Left ventricle myocardium superior (tissue), 1 donor: ENCODE measurements at regions of chr11 and their contacts with region 1.

Region 1: GRCh38 chr11:94183886-94184264 is 55.2 kb downstream of the PANX1 start:
- DNase-seq: peak; percentile 68
- ATAC-seq: peak; percentile 79

Region 2: DNA sequence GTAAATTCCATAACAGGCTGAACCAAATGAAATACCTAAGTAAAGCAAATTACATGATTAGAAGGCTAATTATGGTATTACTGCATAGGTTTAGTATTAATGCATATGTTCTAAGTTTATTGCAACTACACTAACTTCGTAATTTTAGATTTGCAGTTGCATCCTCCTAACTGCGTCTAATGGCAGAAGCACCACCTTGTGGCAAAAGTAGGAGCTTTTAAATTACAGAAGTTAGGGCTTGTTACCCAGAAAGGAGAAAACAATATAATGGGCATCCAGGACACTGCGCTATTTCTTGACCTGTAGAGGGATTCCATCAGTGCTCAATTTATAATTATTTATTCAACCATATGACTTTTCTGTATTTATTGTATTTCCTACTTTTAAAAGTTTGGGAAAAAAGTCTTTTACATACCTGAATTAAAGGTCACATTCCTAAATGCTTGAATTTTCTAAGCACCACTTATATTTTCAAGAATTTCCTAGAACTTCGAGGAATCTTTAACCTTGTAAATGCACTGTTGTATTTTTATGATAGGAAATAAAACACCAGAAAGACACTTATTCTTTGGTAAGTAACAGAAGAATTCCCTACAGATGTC is 233.6 kb after region 1 on chr11:
- intact Hi-C with region 1: loop called (anchors 10 kb)
- DNase-seq: no peak
- ATAC-seq: peak; percentile 49